MCF 10A (cell line): ENCODE measurements at regions of chr2 and their contacts with region 1.

Region 1: GRCh38 chr2:1544478-1545069 is 131.3 kb downstream of the TPO start:
- DNase-seq: peak; percentile 42
- H3K4me3 Mint-ChIP-seq: no peak overlapping the region
- H3K27ac Mint-ChIP-seq: no peak overlapping the region
- H3K4me1 Mint-ChIP-seq: peaks cover 7% of the 10 kb centered on the region
- H3K27me3 Mint-ChIP-seq: no peaks in the 10 kb centered on the region
- CTCF ChIP-seq: no peak

Region 2: DNA sequence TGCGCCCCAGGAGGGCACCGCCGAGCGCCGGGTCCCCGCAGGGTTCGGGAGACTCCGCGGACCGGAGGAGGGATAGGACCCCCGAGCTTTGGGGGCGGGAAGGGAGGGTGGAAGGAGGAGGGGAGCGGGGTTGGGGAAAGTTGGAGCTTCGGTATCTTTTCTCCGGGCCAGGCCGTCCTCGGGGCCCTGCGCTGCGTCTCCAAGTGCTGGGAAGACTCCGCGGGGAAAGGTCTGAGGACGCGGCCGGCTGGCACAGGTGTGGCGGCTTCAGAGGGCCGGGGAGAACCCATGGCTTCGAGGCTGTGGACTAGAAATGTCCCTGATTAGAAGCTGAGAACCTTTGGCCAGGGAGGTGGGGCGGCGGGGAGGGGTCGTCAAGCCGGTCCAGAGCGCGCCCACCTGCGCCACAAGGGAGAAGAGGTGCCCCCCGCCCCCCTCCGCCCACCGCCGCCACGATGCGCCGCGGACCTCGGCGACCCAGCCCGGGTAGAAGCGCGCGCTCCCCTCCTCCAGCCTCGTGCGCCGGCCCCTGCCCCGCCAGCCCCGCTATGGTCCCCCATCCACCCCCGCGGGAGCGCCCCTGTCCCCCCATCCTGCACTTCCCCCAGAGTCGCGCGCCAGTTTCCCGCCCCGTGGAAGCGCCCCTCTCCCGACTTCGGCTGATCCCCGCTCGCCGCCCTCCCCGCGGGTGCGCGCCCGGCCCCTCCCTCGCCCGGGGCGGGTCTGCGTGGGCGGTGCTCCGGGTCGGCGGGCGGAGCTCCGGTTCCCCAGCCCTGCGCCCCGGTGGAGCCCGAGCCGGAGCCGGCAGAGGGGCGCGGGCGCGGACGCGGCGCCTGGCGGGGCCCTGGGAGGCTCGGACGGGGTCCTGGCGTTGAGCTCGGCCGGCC is 594.3 kb before region 1 on chr2 and contains the start of gene SNTG2:
- CTCF ChIA-PET with region 1: interaction called, 118 read pairs
- POLR2A ChIA-PET with region 1: interaction called, 3 read pairs
- intact Hi-C with region 1: loop called (anchors 1 kb)
- DNase-seq: no peak
- H3K4me3 Mint-ChIP-seq: peak within 1 kb of the TSS; percentile 19
- H3K27ac Mint-ChIP-seq: no peak within 1 kb of the TSS
- H3K4me1 Mint-ChIP-seq: no peaks in the 10 kb centered on the region
- H3K27me3 Mint-ChIP-seq: peaks cover 11% of the 10 kb centered on the region
- CTCF ChIP-seq: no peak
- total RNA-seq, gene SNTG2: not detected in 2 replicates